K562 (cell line): ENCODE measurements at regions of chr1 and their contacts with region 1.

Region 1: DNA sequence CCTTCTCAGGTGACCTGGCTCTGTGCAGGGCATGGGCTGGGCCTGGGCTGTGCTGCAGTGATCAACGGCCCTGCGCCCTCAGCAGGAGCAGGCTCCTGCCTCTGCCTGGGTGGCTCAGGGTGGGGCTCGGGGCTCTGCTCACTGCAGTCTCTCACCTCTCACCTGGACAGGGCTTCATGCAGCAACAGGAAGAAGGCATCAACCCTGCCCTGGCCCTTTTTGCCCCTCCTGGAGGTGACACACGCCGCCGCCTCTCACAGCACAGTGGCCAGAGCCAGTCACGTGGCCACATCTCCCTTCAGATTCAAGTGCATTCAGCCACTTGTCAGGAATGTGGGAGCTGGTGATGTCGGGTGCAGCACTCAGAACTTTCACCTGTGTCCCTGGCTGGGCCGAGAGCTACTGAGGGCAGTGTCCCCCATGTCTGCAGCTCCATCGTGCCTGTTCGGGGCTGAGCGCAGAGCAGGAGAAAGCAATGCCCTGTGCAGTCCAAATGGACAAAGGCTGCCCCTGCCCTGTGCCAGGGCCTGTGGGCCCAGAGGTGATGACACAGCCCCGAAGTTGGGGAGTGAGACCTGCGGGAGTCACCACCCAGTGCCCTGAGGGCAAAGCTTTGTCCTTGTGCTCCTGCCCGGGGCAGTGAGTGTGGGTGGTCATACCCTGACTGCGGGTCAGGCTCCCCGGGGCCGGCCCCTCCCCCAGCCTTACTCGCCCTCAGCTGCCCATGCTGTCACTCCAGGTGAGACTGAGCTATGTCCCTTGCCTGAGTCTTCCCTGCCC is 314.0 kb downstream of the PTPRU start:
- DNase-seq: no peak
- ATAC-seq: no peak
- H3K4me3 ChIP-seq: no peak overlapping the region
- H3K27ac ChIP-seq: no peak overlapping the region
- H3K4me1 ChIP-seq: no peaks in the 10 kb centered on the region
- H3K27me3 ChIP-seq: no peaks in the 10 kb centered on the region; a peak in 1 of 5 replicates
- CTCF ChIP-seq: no peak
- EP300 ChIP-seq: no peak
- POLR2A ChIP-seq: no peak
- RAD21 ChIP-seq: no peak

Region 2: GRCh38 chr1:30657759-30658253 is 1107.5 kb after region 1 on chr1:
- CTCF ChIA-PET with region 1: no interaction called
- POLR2A ChIA-PET with region 1: interaction called, 3 read pairs
- in situ Hi-C with region 1: loop called (anchors 5 kb)
- intact Hi-C with region 1: no loop called
- DNase-seq: no peak
- ATAC-seq: peak; percentile 19; the same call in 1 of the 3 replicates
- H3K4me3 ChIP-seq: no peak overlapping the region
- H3K27ac ChIP-seq: no peak overlapping the region
- H3K4me1 ChIP-seq: peaks cover 0 to 10% of the 10 kb centered on the region in 2 experiments; a peak in 1 of 5 replicates
- H3K27me3 ChIP-seq: peaks cover 16 to 57% of the 10 kb centered on the region in 2 experiments
- CTCF ChIP-seq: no peak
- EP300 ChIP-seq: no peak
- POLR2A ChIP-seq: no peak
- RAD21 ChIP-seq: no peak